ENCODE measurements at regions of chr9 and their contacts with region 1.

Region 1: DNA sequence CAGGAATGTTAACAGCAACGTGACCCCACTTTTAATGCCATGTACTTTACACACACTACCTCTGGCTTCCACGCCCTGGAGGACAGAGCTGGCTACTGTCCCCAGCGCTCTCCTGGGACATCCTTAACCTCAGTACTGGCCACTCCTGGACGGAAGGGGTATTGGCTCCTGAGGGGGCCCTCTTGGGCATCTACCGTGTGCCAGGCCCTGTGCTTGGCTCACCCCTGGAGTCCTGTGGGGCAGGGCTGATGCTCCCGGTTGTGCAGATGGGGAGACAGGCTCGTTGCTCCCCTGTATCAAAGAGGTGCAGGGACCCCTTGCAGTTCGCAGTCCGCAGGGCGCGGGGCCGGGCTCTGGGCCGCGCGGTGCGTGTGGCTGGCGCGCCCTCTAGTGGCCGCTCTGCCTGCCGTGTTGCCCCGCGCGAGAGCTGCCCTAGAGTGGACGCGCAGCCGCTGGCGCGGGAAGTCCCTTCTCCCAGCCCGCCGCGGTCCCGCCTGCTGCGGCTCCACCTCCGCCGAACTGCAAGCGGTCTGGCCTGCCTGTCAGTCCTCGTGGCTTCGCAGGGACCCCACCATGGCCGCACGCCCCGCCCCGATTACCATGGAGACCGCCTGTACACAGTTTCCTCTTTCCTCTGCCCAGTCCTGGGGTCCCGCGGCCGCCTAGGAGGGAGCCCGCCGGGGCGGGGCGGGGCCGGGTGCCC is at the start of gene WDR38:
- DNase-seq: peak; percentile 76
- H3K4me3 ChIP-seq: peak within 1 kb of the TSS; percentile 63
- H3K27ac ChIP-seq: no peak within 1 kb of the TSS
- H3K4me1 ChIP-seq: peaks cover 11% of the 10 kb centered on the region
- CTCF ChIP-seq: peak; percentile 94
- total RNA-seq, gene WDR38: not detected in 2 replicates

Region 2: GRCh38 chr9:124617471-124618141 is 235.4 kb before region 1 on chr9:
- CTCF ChIA-PET with region 1: no interaction called
- POLR2A ChIA-PET with region 1: no interaction called
- intact Hi-C with region 1: loop called (anchors 1 kb)
- DNase-seq: peak; percentile 76
- H3K4me3 ChIP-seq: no peak overlapping the region
- H3K27ac ChIP-seq: no peak overlapping the region
- H3K4me1 ChIP-seq: peaks cover 6% of the 10 kb centered on the region
- CTCF ChIP-seq: peak; percentile 98

Region 3: DNA sequence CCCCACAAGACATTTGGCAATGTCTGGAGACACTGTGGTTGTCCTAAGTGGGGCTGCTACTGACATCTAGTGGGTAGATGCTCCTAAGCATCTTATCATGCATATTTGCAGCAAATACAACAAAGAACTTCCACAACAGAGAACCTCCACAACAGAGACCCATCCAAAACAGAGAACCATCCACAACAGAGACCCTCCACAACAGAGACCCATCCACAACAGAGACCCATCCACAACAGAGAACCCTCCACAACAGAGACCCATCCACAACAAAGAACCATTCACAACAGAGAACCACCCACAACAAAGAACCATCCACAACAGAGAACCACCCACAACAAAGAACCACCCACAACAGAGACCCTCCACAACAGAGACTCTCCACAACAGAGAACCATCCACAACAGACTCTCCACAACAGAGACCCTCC is 41.8 kb after region 1 on chr9:
- CTCF ChIA-PET with region 1: no interaction called
- POLR2A ChIA-PET with region 1: no interaction called
- intact Hi-C with region 1: loop called (anchors 1 kb)
- DNase-seq: peak; percentile 83
- H3K4me3 ChIP-seq: no peak overlapping the region
- H3K27ac ChIP-seq: no peak overlapping the region
- H3K4me1 ChIP-seq: peaks cover 8% of the 10 kb centered on the region
- CTCF ChIP-seq: peak; percentile 88

Measured in OCI-LY7 (cell line).